HCT116 (cell line): ENCODE measurements at regions of chr4 and their contacts with region 1.

Region 1: DNA sequence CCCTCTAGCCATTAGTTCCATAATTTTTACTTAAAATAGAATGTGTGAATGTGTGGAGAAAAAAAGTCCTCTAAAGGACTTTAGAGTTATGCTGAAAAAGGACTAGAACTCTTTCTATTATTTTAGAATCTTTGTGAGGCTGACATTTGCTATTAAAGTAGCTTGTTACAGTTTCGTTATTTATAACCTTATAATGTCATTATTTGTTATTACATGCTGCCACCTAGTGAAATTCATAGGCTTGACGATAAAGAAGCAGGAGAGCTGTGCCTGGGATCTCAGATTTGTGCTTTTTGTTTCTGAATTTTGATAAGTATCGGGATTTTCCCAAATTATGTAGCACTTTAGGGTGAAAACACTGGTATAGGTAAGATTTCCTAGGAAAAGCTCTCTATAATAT is 38.5 kb upstream of the TAPT1 start:
- DNase-seq: peak; percentile 35
- ATAC-seq: no peak
- H3K4me3 ChIP-seq: no peak overlapping the region
- H3K27ac ChIP-seq: no peak overlapping the region
- H3K4me1 ChIP-seq: no peaks in the 10 kb centered on the region
- H3K27me3 ChIP-seq: no peaks in the 10 kb centered on the region
- CTCF ChIP-seq: peak; percentile 22 to 74 (median 61); a peak in 3 of 6 replicates
- POLR2A ChIP-seq: no peak
- RAD21 ChIP-seq: peak; percentile 76

Region 2: DNA sequence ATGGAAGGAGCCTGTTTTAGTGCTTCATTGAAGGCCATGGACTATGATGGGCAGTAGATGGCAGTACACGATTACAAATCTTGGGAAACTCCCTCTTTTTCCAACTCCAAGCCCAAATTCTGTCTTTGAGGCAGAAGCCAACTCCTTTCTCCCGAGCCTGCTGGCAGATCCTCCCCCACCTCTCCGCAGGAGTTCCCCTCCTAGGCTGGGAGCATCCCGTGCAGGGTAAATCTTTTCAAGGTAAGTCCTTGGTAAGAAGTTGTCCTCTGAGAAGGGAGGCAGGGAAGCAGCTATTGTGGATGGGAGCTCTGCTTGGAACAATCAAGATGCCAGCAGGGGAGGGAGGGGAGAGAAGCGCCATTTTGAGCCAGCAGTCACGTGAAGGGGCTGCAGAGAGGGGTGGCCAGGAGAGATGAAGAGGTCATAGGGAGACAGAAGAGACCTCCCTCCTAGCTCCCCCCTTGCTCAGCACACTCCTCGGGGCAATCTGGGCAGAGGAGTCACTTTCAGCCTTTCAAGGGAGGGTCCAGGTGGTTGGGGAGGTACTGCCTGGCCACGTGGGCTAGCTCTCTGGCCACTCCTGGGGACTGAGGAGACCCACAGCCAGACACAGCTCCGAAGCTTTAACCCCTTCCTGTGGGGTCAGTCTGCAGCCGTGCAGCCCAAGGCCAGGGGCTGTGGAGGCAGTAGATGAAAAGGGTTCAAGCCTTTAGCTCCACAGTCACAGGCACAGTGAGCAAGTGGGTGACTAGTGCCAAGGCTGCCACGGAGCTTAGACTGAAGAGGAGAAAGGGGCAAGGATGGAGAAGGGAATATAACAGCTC is 785.5 kb before region 1 on chr4:
- CTCF ChIA-PET with region 1: interaction called, 5 read pairs
- POLR2A ChIA-PET with region 1: no interaction called
- RAD21 ChIA-PET with region 1: interaction called in 1 of 2 experiments, 3 read pairs
- intact Hi-C with region 1: loop called (anchors 5 kb)
- DNase-seq: peak; percentile 82
- ATAC-seq: peak; percentile 87
- H3K4me3 ChIP-seq: peak overlapping the region; percentile 62 to 68
- H3K27ac ChIP-seq: peak overlapping the region; percentile 56
- H3K4me1 ChIP-seq: peaks cover 5 to 11% of the 10 kb centered on the region in 2 experiments
- H3K27me3 ChIP-seq: no peaks in the 10 kb centered on the region
- CTCF ChIP-seq: peak; percentile 64 to 79 (median 74)
- POLR2A ChIP-seq: peak; percentile 70
- RAD21 ChIP-seq: peak; percentile 92

Region 3: GRCh38 chr4:15956179-15956850 is 308.5 kb before region 1 on chr4:
- CTCF ChIA-PET with region 1: interaction called, 16 read pairs
- POLR2A ChIA-PET with region 1: no interaction called
- RAD21 ChIA-PET with region 1: interaction called in 1 of 2 experiments, 3 read pairs
- intact Hi-C with region 1: no loop called
- DNase-seq: peak; percentile 78
- ATAC-seq: peak; percentile 96
- H3K4me3 ChIP-seq: no peak overlapping the region
- H3K27ac ChIP-seq: no peak overlapping the region
- H3K4me1 ChIP-seq: peaks cover 0 to 7% of the 10 kb centered on the region in 2 experiments; a peak in 3 of 4 replicates
- H3K27me3 ChIP-seq: no peaks in the 10 kb centered on the region
- CTCF ChIP-seq: peak; percentile 92 to 97 (median 95)
- POLR2A ChIP-seq: no peak
- RAD21 ChIP-seq: peak; percentile 100

Region 4: DNA sequence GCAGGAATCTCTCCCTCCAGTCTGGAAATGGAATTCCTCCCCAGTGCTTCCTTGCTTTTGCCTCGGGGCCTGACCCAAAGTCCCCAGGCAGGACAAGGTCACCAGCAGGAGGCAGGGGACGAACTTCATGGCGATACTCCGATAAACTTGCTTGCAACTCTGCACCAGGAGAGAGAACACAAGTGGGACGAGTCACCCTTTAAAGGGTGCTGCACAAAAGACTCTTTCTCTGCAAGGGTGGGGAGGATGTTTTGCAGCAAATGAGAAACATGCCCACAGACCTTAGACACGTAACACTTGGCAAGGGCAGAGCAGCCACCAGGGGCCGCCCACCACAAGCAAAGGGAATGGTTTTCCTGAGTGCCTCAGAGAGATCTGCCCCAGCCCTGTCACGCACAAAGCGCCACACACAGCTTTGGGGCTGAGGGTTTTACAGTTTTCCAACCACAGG is 301.8 kb before region 1 on chr4 and contains the start of gene FGFBP2:
- CTCF ChIA-PET with region 1: interaction called, 32 read pairs
- POLR2A ChIA-PET with region 1: interaction called, 6 read pairs
- RAD21 ChIA-PET with region 1: interaction called, 3 read pairs
- intact Hi-C with region 1: loop called (anchors 1 kb)
- DNase-seq: peak; percentile 21
- ATAC-seq: peak; percentile 91
- H3K4me3 ChIP-seq: no peak within 1 kb of the TSS
- H3K27ac ChIP-seq: no peak within 1 kb of the TSS
- H3K4me1 ChIP-seq: peaks cover 0 to 7% of the 10 kb centered on the region in 2 experiments; a peak in 1 of 4 replicates
- H3K27me3 ChIP-seq: no peaks in the 10 kb centered on the region
- CTCF ChIP-seq: peak; percentile 63 to 74 (median 69)
- POLR2A ChIP-seq: no peak
- RAD21 ChIP-seq: peak; percentile 75
- total RNA-seq, gene FGFBP2: not detected

Region 5: GRCh38 chr4:16026160-16026761 is 238.5 kb before region 1 on chr4:
- CTCF ChIA-PET with region 1: interaction called, 12 read pairs
- POLR2A ChIA-PET with region 1: no interaction called
- RAD21 ChIA-PET with region 1: interaction called in 1 of 2 experiments, 5 read pairs
- intact Hi-C with region 1: loop called (anchors 1 kb)
- DNase-seq: peak; percentile 48
- ATAC-seq: peak; percentile 42; the same call in 1 of the 2 replicates
- H3K4me3 ChIP-seq: no peak overlapping the region
- H3K27ac ChIP-seq: no peak overlapping the region
- H3K4me1 ChIP-seq: no peaks in the 10 kb centered on the region
- H3K27me3 ChIP-seq: no peaks in the 10 kb centered on the region
- CTCF ChIP-seq: peak; percentile 65 to 95 (median 76)
- POLR2A ChIP-seq: no peak
- RAD21 ChIP-seq: peak; percentile 85

Region 6: DNA sequence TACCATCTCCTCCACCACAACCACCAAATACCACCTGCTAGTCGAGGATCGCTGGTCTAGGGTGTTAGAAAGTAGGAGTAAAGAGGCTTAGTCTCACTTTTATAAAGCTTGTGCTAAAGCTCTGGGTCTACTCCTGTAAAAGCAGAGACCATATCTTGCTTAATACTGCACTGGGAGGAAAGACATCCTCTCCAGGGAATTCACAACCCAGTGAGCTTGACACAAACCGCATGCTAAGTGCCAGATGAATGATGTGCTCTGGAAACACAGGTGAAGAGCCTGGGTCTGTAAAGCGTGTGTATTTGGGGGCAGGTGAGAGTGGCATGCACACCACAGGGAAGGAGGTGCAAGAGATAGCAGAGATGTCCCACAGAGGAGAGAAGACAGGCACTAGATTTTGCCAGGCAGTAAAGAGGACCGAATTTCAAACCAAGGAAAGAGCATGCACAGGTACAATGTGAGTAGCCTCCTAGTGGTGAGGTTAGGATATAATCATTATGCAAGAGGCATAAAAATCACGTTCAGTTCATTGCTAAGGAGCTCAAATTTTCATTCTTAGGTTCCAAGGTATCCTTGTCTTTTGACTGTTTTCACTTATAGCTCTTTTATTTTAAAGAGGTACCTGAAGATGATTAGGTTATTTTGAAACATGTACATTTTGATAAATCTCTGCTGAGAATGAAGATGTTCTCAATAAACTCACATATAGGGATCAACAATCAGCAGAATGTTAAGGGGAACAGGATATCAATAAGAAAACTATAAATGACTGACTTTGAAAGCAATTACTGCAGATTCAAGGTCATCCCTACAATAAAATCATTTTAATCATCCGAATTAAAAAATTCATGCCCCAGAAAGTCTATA is 59.3 kb before region 1 on chr4:
- CTCF ChIA-PET with region 1: interaction called, 11 read pairs
- POLR2A ChIA-PET with region 1: no interaction called
- RAD21 ChIA-PET with region 1: no interaction called
- intact Hi-C with region 1: no loop called
- DNase-seq: no peak
- ATAC-seq: peak; percentile 83
- H3K4me3 ChIP-seq: no peak overlapping the region
- H3K27ac ChIP-seq: no peak overlapping the region
- H3K4me1 ChIP-seq: no peaks in the 10 kb centered on the region
- H3K27me3 ChIP-seq: no peaks in the 10 kb centered on the region
- CTCF ChIP-seq: peak; percentile 23 to 67 (median 60); a peak in 5 of 6 replicates
- POLR2A ChIP-seq: no peak
- RAD21 ChIP-seq: peak; percentile 29; the same call in 1 of the 2 replicates